Activated naive CD4-positive, alpha-beta T cell treated with anti-CD3 and anti-CD28 coated beads, Interleukin-2, amount 10 ng/mL, durations not matched to agents 7 days and 5 days (primary cell): ENCODE measurements at regions of chr4 and their contacts with region 1.

Region 1: GRCh38 chr4:108342325-108342970 is 173.7 kb upstream of the LEF1 start:
- DNase-seq: peak; percentile 62
- H3K4me3 Mint-ChIP-seq: peak overlapping the region; percentile 12
- H3K27ac Mint-ChIP-seq: peak overlapping the region; percentile 83
- H3K4me1 Mint-ChIP-seq: peaks cover 70% of the 10 kb centered on the region
- H3K27me3 Mint-ChIP-seq: no peaks in the 10 kb centered on the region

Region 2: DNA sequence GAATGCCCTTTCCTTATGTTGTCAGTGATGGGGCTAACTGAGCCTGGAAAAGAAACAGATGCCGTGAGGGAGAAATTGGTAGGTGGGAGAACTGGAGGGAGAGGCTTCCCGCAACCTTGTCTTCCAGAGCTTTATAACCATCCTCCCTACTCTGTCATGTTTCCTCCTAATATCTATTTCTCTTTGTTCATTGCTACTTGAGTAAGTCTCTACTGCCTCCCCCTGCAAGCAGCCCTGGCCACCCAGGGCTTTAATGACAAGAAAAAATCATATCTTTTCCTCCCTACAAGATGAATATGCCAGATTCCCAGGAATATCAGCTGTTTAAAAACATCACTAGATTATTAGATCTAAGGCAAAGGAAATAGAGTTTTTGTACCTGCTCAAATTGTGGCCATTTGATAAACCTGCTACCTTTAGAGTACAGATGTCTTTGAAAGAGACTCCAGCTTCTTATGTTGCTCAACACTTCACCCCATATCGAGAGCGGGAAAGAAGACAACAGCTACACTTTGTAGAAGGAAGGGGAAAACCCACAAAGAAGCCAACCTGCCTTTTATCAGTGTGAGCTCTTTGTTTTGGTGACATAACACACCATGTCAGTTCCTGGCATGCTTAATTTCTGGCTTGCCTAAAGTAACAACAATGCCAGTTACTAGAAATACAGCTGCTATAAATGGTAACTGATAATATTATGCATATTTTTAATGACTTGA is 12.9 kb after region 1 on chr4:
- CTCF ChIA-PET with region 1: interaction called, 14 read pairs
- DNase-seq: peak; percentile 53
- H3K4me3 Mint-ChIP-seq: peak overlapping the region; percentile 32
- H3K27ac Mint-ChIP-seq: peak overlapping the region; percentile 89
- H3K4me1 Mint-ChIP-seq: peaks cover 71% of the 10 kb centered on the region
- H3K27me3 Mint-ChIP-seq: no peaks in the 10 kb centered on the region